ENCODE measurements at regions of chr19 and their contacts with region 1.

Region 1: DNA sequence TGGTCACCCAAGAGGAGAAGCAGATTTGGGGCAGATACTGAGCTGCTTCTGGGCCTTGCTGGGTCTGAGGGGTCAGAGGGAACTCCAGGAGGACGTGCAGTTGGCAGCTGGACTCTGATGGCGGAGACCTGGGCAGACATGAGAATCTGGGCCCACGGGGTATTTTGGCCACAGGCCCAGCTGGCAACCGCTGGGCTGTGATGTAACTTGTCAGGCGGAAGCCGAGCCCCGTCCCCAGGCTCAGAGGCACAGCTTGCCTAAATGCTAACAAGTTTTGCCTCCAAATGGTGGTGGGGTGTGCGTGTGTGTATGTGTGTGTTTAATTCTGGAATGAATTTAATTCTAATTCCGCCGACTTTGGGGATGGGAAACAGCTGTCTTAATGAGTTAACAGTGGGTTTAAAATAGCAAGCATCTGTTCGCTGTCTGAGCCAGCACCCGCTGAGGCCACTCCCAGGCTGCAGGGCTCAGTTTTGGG is 11.6 kb downstream of the ZNRF4 start:
- DNase-seq: peak; percentile 89
- H3K4me3 ChIP-seq: no peak overlapping the region
- H3K27ac ChIP-seq: no peak overlapping the region; a peak in 1 of 4 replicates
- H3K4me1 ChIP-seq: peaks cover 0 to 10% of the 10 kb centered on the region in 2 experiments; a peak in 1 of 4 replicates
- H3K27me3 ChIP-seq: no peaks in the 10 kb centered on the region
- CTCF ChIP-seq: no peak
- EP300 ChIP-seq: 0 out of 4 replicates have a peak, but pooled peaks of 1 of the 2 experiments have one; percentile 31
- RAD21 ChIP-seq: peak; percentile 19; the same call in 1 of the 2 replicates

Region 2: GRCh38 chr19:5321851-5322681 is 144.8 kb before region 1 on chr19:
- CTCF ChIA-PET with region 1: no interaction called
- POLR2A ChIA-PET with region 1: no interaction called
- DNase-seq: peak; percentile 51
- H3K4me3 ChIP-seq: no peak overlapping the region
- H3K27ac ChIP-seq: no peak overlapping the region
- H3K4me1 ChIP-seq: no peaks in the 10 kb centered on the region; a peak in 1 of 4 replicates
- H3K27me3 ChIP-seq: no peaks in the 10 kb centered on the region
- CTCF ChIP-seq: no peak
- EP300 ChIP-seq: no peak
- RAD21 ChIP-seq: no peak

Region 3: GRCh38 chr19:5480427-5480836 is 13.6 kb after region 1 on chr19:
- CTCF ChIA-PET with region 1: interaction called, 11 read pairs
- POLR2A ChIA-PET with region 1: no interaction called
- DNase-seq: peak; percentile 69
- H3K4me3 ChIP-seq: no peak overlapping the region
- H3K27ac ChIP-seq: no peak overlapping the region
- H3K4me1 ChIP-seq: no peaks in the 10 kb centered on the region; a peak in 1 of 4 replicates
- H3K27me3 ChIP-seq: peaks cover 38% of the 10 kb centered on the region
- CTCF ChIP-seq: peak; percentile 64
- EP300 ChIP-seq: no peak
- RAD21 ChIP-seq: peak; percentile 42